ENCODE measurements at regions of chr1 and their contacts with region 1.

Region 1: GRCh38 chr1:15152318-15153183 is 996 bp upstream of the TMEM51 start:
- DNase-seq: peak; percentile 88 to 93 (median 90)
- ATAC-seq: peak; percentile 67
- H3K4me3 ChIP-seq: peak overlapping the region; percentile 69
- H3K4me1 ChIP-seq: peaks cover 18% of the 10 kb centered on the region
- CTCF ChIP-seq: peak; percentile 53

Region 2: GRCh38 chr1:15028102-15028501 is 124.4 kb before region 1 on chr1:
- intact Hi-C with region 1: no loop called
- DNase-seq: peak in 1 of 3 donors; percentile 67
- ATAC-seq: no peak
- H3K4me3 ChIP-seq: no peak overlapping the region
- H3K4me1 ChIP-seq: peaks cover 6% of the 10 kb centered on the region
- CTCF ChIP-seq: no peak

Region 3: GRCh38 chr1:15218287-15219279 is 66.0 kb after region 1 on chr1:
- intact Hi-C with region 1: loop called in 1 of 2 experiments (anchors 10 kb)
- DNase-seq: no peak
- ATAC-seq: no peak
- H3K4me3 ChIP-seq: no peak overlapping the region
- H3K4me1 ChIP-seq: peaks cover 24% of the 10 kb centered on the region
- CTCF ChIP-seq: no peak

Region 4: GRCh38 chr1:15272009-15272788 is 119.6 kb after region 1 on chr1:
- intact Hi-C with region 1: loop called (anchors 5 kb)
- DNase-seq: peak; percentile 63 to 82 (median 67)
- ATAC-seq: peak; percentile 97
- H3K4me3 ChIP-seq: no peak overlapping the region
- H3K4me1 ChIP-seq: peaks cover 9% of the 10 kb centered on the region
- CTCF ChIP-seq: peak; percentile 60

Measured in mucosa of descending colon (tissue), 3 donors.